MCF 10A (cell line): ENCODE measurements at regions of chr5 and their contacts with region 1.

Region 1: GRCh38 chr5:110790673-110791072 is 51.9 kb downstream of the SLC25A46 start:
- DNase-seq: peak; percentile 32
- H3K4me3 Mint-ChIP-seq: no peak overlapping the region
- H3K27ac Mint-ChIP-seq: no peak overlapping the region
- H3K4me1 Mint-ChIP-seq: peaks cover 1% of the 10 kb centered on the region
- H3K27me3 Mint-ChIP-seq: no peaks in the 10 kb centered on the region
- CTCF ChIP-seq: peak; percentile 26

Region 2: GRCh38 chr5:110865400-110866094 is 74.9 kb after region 1 on chr5:
- CTCF ChIA-PET with region 1: interaction called, 4 read pairs
- POLR2A ChIA-PET with region 1: no interaction called
- intact Hi-C with region 1: loop called (anchors 1 kb)
- DNase-seq: peak; percentile 76
- H3K4me3 Mint-ChIP-seq: no peak overlapping the region
- H3K27ac Mint-ChIP-seq: no peak overlapping the region
- H3K4me1 Mint-ChIP-seq: no peaks in the 10 kb centered on the region
- H3K27me3 Mint-ChIP-seq: peaks cover 14% of the 10 kb centered on the region
- CTCF ChIP-seq: peak; percentile 42

Region 3: DNA sequence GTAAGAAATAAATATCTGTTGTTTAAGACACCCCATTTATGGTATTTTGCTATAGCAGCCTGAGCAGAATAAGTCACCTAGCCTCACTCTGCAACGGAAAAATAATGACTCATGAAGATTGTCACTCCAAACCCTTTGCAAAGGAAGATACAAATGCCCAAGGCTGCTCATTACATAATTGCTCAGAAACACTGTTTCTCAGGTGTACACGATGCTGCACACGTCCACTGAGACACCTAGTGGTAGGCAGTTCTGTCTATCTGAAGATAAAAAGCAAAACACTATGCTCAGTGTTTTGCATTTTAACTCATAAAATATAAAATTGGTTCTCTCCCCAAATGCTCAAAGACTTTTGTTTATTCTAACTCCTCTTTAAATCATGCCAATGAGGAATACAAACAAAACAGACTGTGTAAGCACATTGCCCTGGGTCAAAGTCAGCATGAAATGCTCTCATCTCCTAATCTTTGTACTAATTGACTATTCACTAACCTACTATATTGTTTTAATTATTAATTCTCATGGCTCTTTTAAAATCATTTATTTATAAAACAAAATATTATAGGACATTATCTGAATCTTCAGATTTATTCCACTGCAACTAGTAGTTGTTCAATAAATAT is 273.1 kb after region 1 on chr5:
- CTCF ChIA-PET with region 1: interaction called, 11 read pairs
- POLR2A ChIA-PET with region 1: interaction called, 4 read pairs
- intact Hi-C with region 1: loop called (anchors 1 kb)
- DNase-seq: peak; percentile 58
- H3K4me3 Mint-ChIP-seq: no peak overlapping the region
- H3K27ac Mint-ChIP-seq: no peak overlapping the region
- H3K4me1 Mint-ChIP-seq: peaks cover 6% of the 10 kb centered on the region
- H3K27me3 Mint-ChIP-seq: no peaks in the 10 kb centered on the region
- CTCF ChIP-seq: peak; percentile 50

Region 4: DNA sequence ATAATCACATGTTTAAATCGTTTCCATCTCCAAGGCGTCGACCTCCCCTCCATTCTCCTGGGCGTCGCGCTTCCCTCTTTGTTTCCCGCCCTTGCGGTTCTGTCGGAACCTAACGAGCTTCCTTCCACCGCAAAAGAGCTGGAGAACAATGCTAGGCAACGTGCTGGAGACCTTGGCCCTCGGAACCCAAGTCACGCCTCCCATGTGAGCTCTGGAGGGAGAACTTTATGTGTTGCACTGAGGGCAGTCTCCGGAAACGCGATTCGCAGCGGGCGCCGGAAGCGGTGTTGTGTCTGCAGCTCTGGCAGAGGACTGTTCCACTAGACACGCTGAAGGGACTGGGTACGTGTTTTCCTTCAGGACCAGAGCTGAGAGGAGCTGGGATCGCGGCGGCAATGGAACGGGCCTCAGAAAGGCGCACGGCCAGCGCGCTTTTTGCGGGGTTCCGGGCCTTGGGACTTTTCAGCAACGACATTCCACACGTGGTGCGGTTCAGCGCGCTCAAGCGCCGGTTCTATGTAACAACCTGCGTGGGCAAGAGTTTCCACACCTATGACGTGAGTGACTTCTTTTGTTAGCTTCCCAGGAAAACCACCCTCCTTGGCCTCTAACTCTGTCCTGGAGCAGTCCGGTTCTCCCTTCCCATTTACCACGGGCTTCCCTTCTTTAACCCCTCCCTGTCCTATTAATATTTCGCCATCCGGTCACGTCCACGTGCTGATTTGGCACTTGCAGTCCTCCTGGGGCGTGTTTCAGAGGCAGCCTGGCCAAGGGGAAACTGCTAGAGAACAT is 301.6 kb after region 1 on chr5 and contains the start of gene WDR36:
- CTCF ChIA-PET with region 1: no interaction called
- POLR2A ChIA-PET with region 1: interaction called, 3 read pairs
- intact Hi-C with region 1: loop called (anchors 1 kb)
- DNase-seq: peak; percentile 94
- H3K4me3 Mint-ChIP-seq: peak within 1 kb of the TSS; percentile 96
- H3K27ac Mint-ChIP-seq: peak within 1 kb of the TSS; percentile 85
- H3K4me1 Mint-ChIP-seq: peaks cover 22% of the 10 kb centered on the region
- H3K27me3 Mint-ChIP-seq: no peaks in the 10 kb centered on the region
- CTCF ChIP-seq: no peak
- total RNA-seq, gene WDR36: 43.8 and 52.3 TPM in 2 replicates